ENCODE measurements at regions of chrX and their contacts with region 1.

Region 1: GRCh38 chrX:9708904-9709553 is 56.6 kb downstream of the GPR143 start:
- DNase-seq: peak; percentile 60 to 84 (median 74)
- ATAC-seq: peak in 3 of 4 donors; percentile 80 to 83 (median 83)
- H3K4me3 ChIP-seq: no peak overlapping the region
- H3K27ac ChIP-seq: no peak overlapping the region
- H3K4me1 ChIP-seq: peaks cover 0 to 4% (median 0%) of the 10 kb centered on the region in 12 donors
- H3K27me3 ChIP-seq: no peaks in the 10 kb centered on the region
- CTCF ChIP-seq: peak; percentile 73 to 92 (median 78)
- POLR2A ChIP-seq: no peak

Region 2: GRCh38 chrX:8748855-8749254 is 960.2 kb before region 1 on chrX:
- intact Hi-C with region 1: loop called in 1 of 10 experiments (anchors 5 kb)
- DNase-seq: no peak
- ATAC-seq: peak in 1 of 4 donors; percentile 57
- H3K4me3 ChIP-seq: no peak overlapping the region
- H3K27ac ChIP-seq: no peak overlapping the region
- H3K4me1 ChIP-seq: no peaks in the 10 kb centered on the region
- H3K27me3 ChIP-seq: no peaks in the 10 kb centered on the region
- CTCF ChIP-seq: peak in 10 of 12 donors; percentile 28 to 57 (median 44)
- POLR2A ChIP-seq: no peak

Region 3: DNA sequence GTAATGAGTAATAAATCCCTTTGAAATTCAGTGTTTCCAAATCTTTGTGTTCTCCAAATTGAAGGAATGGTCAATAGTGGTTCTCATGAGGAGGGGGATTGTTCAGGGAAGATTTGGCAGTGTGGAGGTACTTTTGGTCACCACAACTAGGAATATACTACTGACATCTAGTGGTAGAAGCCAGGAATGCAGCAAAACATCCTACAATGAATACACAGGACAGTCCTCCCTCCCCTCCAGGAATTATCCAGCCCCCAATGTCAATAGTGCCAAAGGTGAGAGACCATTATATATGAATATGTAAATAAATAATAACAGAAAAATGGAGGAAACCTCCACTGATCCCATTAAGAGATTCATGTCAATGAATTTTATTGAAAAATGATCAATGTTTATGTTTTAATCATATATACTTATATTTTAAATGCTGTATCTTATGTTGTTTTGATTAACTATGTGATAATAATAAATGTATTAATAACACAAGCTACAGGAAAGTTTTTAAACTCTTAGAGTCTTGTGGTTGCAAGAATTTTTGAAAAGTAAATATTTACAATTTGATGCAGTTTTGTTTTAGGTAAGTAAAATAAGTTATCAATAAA is 893.5 kb before region 1 on chrX:
- intact Hi-C with region 1: loop called in 3 of 10 experiments (anchors 5 to 10 kb)
- DNase-seq: no peak
- ATAC-seq: no peak
- H3K4me3 ChIP-seq: no peak overlapping the region
- H3K27ac ChIP-seq: no peak overlapping the region
- H3K4me1 ChIP-seq: no peaks in the 10 kb centered on the region
- H3K27me3 ChIP-seq: peaks cover 0 to 8% (median 0%) of the 10 kb centered on the region in 9 donors
- CTCF ChIP-seq: peak; percentile 46 to 82 (median 66)
- POLR2A ChIP-seq: no peak

Region 4: GRCh38 chrX:8820910-8821527 is 888.0 kb before region 1 on chrX:
- intact Hi-C with region 1: loop called in 3 of 10 experiments (anchors 5 to 10 kb)
- DNase-seq: no peak
- ATAC-seq: no peak
- H3K4me3 ChIP-seq: no peak overlapping the region
- H3K27ac ChIP-seq: no peak overlapping the region
- H3K4me1 ChIP-seq: no peaks in the 10 kb centered on the region
- H3K27me3 ChIP-seq: peaks cover 0 to 31% (median 0%) of the 10 kb centered on the region in 9 donors
- CTCF ChIP-seq: no peak
- POLR2A ChIP-seq: no peak

Region 5: GRCh38 chrX:8870411-8870810 is 838.6 kb before region 1 on chrX:
- intact Hi-C with region 1: loop called in 1 of 10 experiments (anchors 5 kb)
- DNase-seq: no peak
- ATAC-seq: no peak
- H3K4me3 ChIP-seq: no peak overlapping the region
- H3K27ac ChIP-seq: no peak overlapping the region
- H3K4me1 ChIP-seq: peaks cover 0 to 3% (median 0%) of the 10 kb centered on the region in 12 donors
- H3K27me3 ChIP-seq: peaks cover 0 to 13% (median 0%) of the 10 kb centered on the region in 9 donors
- CTCF ChIP-seq: no peak
- POLR2A ChIP-seq: no peak

Region 6: DNA sequence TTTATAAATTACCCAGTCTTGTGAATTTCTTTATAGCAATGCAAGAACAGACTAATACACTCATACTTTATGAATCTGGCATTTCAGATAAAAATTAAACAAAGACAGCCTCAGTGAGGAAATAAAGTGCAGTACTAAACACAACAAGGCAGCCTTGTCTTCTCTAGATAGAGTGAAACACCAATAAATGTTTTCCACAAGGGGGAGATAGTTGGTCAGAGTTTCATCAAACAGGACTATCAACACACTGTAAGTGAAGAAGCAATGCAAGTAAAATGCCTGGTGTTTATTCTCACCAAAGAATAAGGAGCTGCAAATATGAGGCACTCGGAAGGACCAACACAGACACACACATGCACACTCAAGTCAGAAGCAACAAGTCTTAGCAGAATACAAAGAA is 737.9 kb before region 1 on chrX:
- intact Hi-C with region 1: loop called in 5 of 10 experiments (anchors 2 to 10 kb)
- DNase-seq: no peak
- ATAC-seq: peak in 2 of 4 donors; percentile 34 to 50
- H3K4me3 ChIP-seq: no peak overlapping the region
- H3K27ac ChIP-seq: no peak overlapping the region
- H3K4me1 ChIP-seq: no peaks in the 10 kb centered on the region
- H3K27me3 ChIP-seq: peaks cover 0 to 7% (median 0%) of the 10 kb centered on the region in 9 donors
- CTCF ChIP-seq: peak in 10 of 12 donors; percentile 8 to 48 (median 32)
- POLR2A ChIP-seq: no peak

Region 7: GRCh38 chrX:9341291-9342201 is 367.5 kb before region 1 on chrX:
- intact Hi-C with region 1: loop called in 1 of 10 experiments (anchors 10 kb)
- DNase-seq: peak; percentile 67 to 81 (median 74)
- ATAC-seq: peak in 3 of 4 donors; percentile 21 to 37 (median 25)
- H3K4me3 ChIP-seq: peak overlapping the region in 9 of 12 donors; percentile 10 to 46 (median 32)
- H3K27ac ChIP-seq: peak overlapping the region; percentile 44 to 96 (median 70)
- H3K4me1 ChIP-seq: peaks cover 0 to 44% (median 17%) of the 10 kb centered on the region in 12 donors
- H3K27me3 ChIP-seq: no peaks in the 10 kb centered on the region
- CTCF ChIP-seq: no peak
- POLR2A ChIP-seq: no peak

Region 8: GRCh38 chrX:11470250-11470974 is 1761.4 kb after region 1 on chrX:
- intact Hi-C with region 1: no loop called
- DNase-seq: no peak
- ATAC-seq: peak in 2 of 4 donors; percentile 39 to 57
- H3K4me3 ChIP-seq: no peak overlapping the region
- H3K27ac ChIP-seq: peak overlapping the region in 5 of 12 donors; percentile 22 to 48 (median 28)
- H3K4me1 ChIP-seq: peaks cover 0 to 13% (median 0%) of the 10 kb centered on the region in 12 donors
- H3K27me3 ChIP-seq: peaks cover 0 to 5% (median 0%) of the 10 kb centered on the region in 9 donors
- CTCF ChIP-seq: no peak
- POLR2A ChIP-seq: no peak